ENCODE measurements at regions of chr1 and their contacts with region 1.

Region 1: DNA sequence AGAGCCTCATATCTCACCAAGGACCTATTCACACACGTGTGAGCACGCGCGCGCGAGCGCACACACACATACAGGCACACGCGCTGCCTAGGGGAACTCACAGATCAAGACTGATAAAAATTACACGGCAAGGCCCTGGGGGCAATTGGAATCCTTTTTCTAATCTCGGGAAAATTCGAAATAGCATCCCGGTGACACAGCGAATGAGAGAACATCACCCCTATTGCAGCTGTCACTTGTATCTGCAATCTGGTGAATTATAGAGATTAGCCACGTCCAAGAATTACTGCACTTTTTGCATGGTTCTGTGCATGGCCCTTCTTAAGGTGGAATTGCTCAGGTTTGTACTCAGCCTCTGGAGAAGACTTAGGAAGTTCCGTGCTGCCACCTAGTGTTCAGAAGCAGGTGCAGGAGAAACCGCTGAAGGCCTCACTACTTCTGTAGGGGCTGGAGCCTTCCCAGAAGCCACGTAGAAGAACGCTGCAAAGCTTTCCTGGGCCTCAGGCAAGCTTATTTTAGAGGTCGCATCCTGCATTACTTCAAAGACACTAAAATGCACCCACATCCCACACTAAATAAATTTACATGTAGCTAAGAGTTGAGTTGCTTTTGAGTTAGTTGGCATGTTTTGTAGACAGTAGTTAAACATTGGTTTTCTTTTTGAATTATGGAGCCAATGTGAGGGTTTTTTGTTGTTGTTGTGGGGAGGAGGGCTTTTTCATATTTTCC is 229.2 kb upstream of the CAMK1G start:
- DNase-seq: peak; percentile 99
- H3K4me3 Mint-ChIP-seq: peak overlapping the region; percentile 7
- H3K27ac Mint-ChIP-seq: peak overlapping the region; percentile 78
- H3K4me1 Mint-ChIP-seq: peaks cover 41% of the 10 kb centered on the region
- H3K27me3 Mint-ChIP-seq: no peaks in the 10 kb centered on the region
- CTCF ChIP-seq: peak; percentile 98

Region 2: DNA sequence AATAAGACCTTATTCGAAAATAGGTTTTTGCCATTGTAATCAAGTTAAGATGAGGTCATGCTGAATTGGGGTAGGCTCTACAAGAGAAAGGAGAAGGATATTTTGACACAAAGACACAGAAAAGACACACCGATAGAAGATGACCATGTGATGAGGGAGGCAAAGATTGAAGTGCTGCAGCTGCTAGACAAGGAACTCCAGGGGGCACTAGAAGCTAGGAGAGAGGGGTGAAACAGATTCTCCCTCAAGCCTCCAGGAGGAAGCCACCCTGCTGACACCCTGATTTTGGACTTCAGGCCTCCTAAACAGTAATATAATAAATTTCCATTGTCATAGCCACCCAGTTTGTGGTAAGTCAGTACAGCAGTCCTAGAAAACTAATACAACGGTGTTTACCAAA is 277.6 kb before region 1 on chr1:
- CTCF ChIA-PET with region 1: no interaction called
- POLR2A ChIA-PET with region 1: interaction called, 4 read pairs
- intact Hi-C with region 1: loop called (anchors 1 kb)
- DNase-seq: peak; percentile 84
- H3K4me3 Mint-ChIP-seq: no peak overlapping the region
- H3K27ac Mint-ChIP-seq: no peak overlapping the region
- H3K4me1 Mint-ChIP-seq: peaks cover 15% of the 10 kb centered on the region
- H3K27me3 Mint-ChIP-seq: no peaks in the 10 kb centered on the region
- CTCF ChIP-seq: peak; percentile 68

Region 3: DNA sequence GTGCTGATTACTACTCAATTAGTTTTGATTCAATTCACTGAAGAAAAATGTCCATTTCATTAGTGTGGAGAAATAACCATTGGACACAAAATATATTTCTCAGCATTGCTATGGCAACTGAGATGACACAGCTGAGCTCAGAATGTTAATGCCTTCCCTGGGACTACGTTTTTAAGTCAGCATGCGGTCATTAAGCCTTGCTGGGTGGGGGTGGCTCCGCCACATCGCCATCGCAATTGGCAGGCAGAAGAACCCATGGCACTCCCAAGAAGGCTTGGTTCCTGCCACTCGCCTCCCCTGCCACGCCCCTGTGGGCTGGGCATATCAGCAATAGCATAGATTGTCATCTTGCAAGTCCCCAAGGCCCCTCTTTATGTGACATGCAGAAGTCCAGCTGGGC is 27.4 kb before region 1 on chr1:
- CTCF ChIA-PET with region 1: interaction called, 44 read pairs
- POLR2A ChIA-PET with region 1: interaction called, 13 read pairs
- intact Hi-C with region 1: no loop called
- DNase-seq: no peak
- H3K4me3 Mint-ChIP-seq: no peak overlapping the region
- H3K27ac Mint-ChIP-seq: no peak overlapping the region
- H3K4me1 Mint-ChIP-seq: peaks cover 27% of the 10 kb centered on the region
- H3K27me3 Mint-ChIP-seq: no peaks in the 10 kb centered on the region
- CTCF ChIP-seq: no peak

Region 4: GRCh38 chr1:209389258-209389657 is 35.0 kb after region 1 on chr1:
- CTCF ChIA-PET with region 1: interaction called, 714 read pairs
- POLR2A ChIA-PET with region 1: interaction called, 2,201 read pairs
- intact Hi-C with region 1: loop called (anchors 2 kb)
- DNase-seq: peak; percentile 99
- H3K4me3 Mint-ChIP-seq: peak overlapping the region; percentile 22
- H3K27ac Mint-ChIP-seq: peak overlapping the region; percentile 79
- H3K4me1 Mint-ChIP-seq: peaks cover 45% of the 10 kb centered on the region
- H3K27me3 Mint-ChIP-seq: no peaks in the 10 kb centered on the region
- CTCF ChIP-seq: no peak

Region 5: DNA sequence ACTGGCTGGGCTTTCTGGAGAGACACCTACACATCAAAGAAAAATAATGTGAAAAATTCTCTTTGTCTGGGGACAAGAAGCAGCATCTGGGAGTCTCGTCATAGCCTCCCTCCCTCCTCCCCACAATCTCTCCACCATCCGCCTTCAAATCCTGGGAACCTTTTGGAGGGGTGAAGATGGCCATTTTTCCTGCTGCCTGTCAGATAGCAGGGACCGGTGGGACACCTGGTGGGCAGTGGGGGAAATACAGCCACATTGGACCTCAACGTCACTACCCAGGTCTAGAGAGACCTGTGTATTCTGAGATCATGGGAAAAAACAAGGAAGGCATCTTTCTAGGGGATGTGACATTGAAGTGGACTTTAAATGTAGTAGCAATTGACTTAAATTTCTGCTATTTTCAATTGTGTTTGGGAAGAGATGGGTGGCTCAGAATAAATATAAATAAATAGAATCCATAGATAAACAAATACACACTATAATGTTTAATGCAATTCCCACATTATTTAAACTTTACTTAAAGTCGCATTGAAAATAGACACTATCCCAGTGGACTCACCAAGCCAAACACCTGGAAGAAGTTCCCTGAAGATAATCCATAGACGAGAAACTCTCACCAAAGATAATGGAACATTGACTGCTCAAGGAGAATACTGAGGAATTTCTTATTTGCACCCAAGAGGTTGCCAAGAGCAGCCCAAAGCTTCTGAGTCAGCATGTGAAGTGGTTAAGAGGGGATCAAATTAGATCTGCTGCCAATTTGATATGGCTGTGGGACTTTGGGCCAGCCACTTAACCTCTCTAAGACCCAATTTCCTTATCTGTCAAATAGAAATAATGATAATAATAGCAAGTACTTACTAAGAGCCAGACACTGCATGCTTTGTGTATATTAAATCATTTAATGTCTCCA is 81.6 kb after region 1 on chr1:
- CTCF ChIA-PET with region 1: interaction called, 1,242 read pairs
- POLR2A ChIA-PET with region 1: interaction called, 6,956 read pairs
- intact Hi-C with region 1: loop called (anchors 1 kb)
- DNase-seq: peak; percentile 97
- H3K4me3 Mint-ChIP-seq: no peak overlapping the region
- H3K27ac Mint-ChIP-seq: peak overlapping the region; percentile 90
- H3K4me1 Mint-ChIP-seq: peaks cover 51% of the 10 kb centered on the region
- H3K27me3 Mint-ChIP-seq: no peaks in the 10 kb centered on the region
- CTCF ChIP-seq: peak; percentile 100

Region 6: GRCh38 chr1:209527993-209528392 is 173.7 kb after region 1 on chr1:
- CTCF ChIA-PET with region 1: interaction called, 4 read pairs
- POLR2A ChIA-PET with region 1: interaction called, 18 read pairs
- intact Hi-C with region 1: no loop called
- DNase-seq: peak; percentile 36
- H3K4me3 Mint-ChIP-seq: no peak overlapping the region
- H3K27ac Mint-ChIP-seq: peak overlapping the region; percentile 60
- H3K4me1 Mint-ChIP-seq: peaks cover 64% of the 10 kb centered on the region
- H3K27me3 Mint-ChIP-seq: no peaks in the 10 kb centered on the region
- CTCF ChIP-seq: no peak